PC-9 (cell line): ENCODE measurements at regions of chr1 and their contacts with region 1.

Region 1: DNA sequence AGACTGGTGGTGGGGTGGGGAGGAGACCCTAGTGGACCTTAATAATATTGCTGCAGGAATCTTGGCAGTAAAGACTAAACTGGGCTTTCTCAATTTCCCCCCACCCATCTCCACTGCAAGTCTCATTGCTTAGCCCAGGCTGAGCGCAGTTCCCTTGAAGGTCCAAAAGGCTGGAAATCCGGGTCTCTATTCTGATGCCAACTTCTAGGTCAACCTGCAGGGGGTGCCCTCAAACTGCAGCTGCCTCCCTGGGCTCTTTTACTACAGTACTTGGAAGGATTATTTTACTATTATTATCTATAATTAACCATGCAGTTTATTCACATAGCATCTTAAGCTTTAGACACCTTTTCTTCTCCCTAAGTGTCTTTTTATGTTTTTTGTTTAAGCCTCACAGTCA is 85.4 kb upstream of the WARS2 start:
- DNase-seq: no peak
- H3K4me3 ChIP-seq: no peak overlapping the region
- H3K27ac ChIP-seq: no peak overlapping the region
- H3K4me1 ChIP-seq: no peaks in the 10 kb centered on the region
- H3K27me3 ChIP-seq: no peaks in the 10 kb centered on the region
- CTCF ChIP-seq: peak; percentile 29; the same call in 1 of the 2 replicates

Region 2: GRCh38 chr1:119101563-119101962 is 124.3 kb before region 1 on chr1:
- CTCF ChIA-PET with region 1: no interaction called
- POLR2A ChIA-PET with region 1: no interaction called
- intact Hi-C with region 1: no loop called
- DNase-seq: no peak
- H3K4me3 ChIP-seq: no peak overlapping the region
- H3K27ac ChIP-seq: no peak overlapping the region
- H3K4me1 ChIP-seq: no peaks in the 10 kb centered on the region
- H3K27me3 ChIP-seq: no peaks in the 10 kb centered on the region
- CTCF ChIP-seq: no peak

Region 3: DNA sequence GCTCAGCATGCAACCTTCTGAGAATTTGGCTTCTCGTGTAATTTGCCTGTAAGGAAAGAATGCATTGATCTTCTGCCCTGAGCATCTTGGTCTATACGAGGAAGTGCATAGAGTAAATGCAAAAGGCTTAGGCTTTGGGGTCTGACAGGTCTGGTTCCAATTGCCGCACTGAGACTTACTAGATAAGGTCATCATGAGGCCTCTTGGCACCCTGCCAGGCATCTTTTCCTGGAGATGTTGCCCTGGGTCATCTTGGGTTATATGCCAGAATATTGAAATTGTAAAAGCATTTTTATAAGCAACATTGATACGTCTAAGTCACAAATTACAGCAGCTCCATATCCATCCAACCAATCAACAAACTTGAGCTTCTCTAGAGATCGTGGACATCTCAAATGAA is 23.5 kb after region 1 on chr1:
- CTCF ChIA-PET with region 1: no interaction called
- POLR2A ChIA-PET with region 1: no interaction called
- intact Hi-C with region 1: loop called (anchors 2 kb)
- DNase-seq: peak in 1 of 2 experiments; percentile 28
- H3K4me3 ChIP-seq: no peak overlapping the region
- H3K27ac ChIP-seq: no peak overlapping the region
- H3K4me1 ChIP-seq: peaks cover 14% of the 10 kb centered on the region
- H3K27me3 ChIP-seq: no peaks in the 10 kb centered on the region
- CTCF ChIP-seq: no peak